K562 (cell line): ENCODE measurements at regions of chr1 and their contacts with region 1.

Region 1: GRCh38 chr1:38964140-38964548 is 22.5 kb upstream of the RHBDL2 start:
- DNase-seq: peak in 3 of 4 experiments; percentile 24 to 51 (median 40)
- ATAC-seq: peak; percentile 91
- H3K4me3 ChIP-seq: no peak overlapping the region
- H3K27ac ChIP-seq: no peak overlapping the region
- H3K4me1 ChIP-seq: peaks cover 9 to 11% of the 10 kb centered on the region in 2 experiments; a peak in 4 of 5 replicates
- H3K27me3 ChIP-seq: no peaks in the 10 kb centered on the region
- CTCF ChIP-seq: peak; percentile 57 to 73 (median 69)
- EP300 ChIP-seq: no peak
- POLR2A ChIP-seq: no peak
- RAD21 ChIP-seq: peak; percentile 52 to 74; a peak in 3 of 4 replicates

Region 2: GRCh38 chr1:38919130-38919529 is 45.0 kb before region 1 on chr1:
- CTCF ChIA-PET with region 1: no interaction called
- POLR2A ChIA-PET with region 1: no interaction called
- in situ Hi-C with region 1: no loop called
- intact Hi-C with region 1: loop called (anchors 2 kb)
- DNase-seq: peak in 1 of 4 experiments; percentile 23
- ATAC-seq: peak; percentile 48
- H3K4me3 ChIP-seq: no peak overlapping the region
- H3K27ac ChIP-seq: no peak overlapping the region
- H3K4me1 ChIP-seq: peaks cover 22 to 28% of the 10 kb centered on the region in 2 experiments; a peak in 4 of 5 replicates
- H3K27me3 ChIP-seq: no peaks in the 10 kb centered on the region
- CTCF ChIP-seq: peak; percentile 17 to 44 (median 20); a peak in 2 of 6 replicates
- EP300 ChIP-seq: no peak
- POLR2A ChIP-seq: no peak
- RAD21 ChIP-seq: peak in 1 of 2 experiments; percentile 42; a peak in 1 of 4 replicates